MCF 10A (cell line): ENCODE measurements at regions of chr16 and their contacts with region 1.

Region 1: DNA sequence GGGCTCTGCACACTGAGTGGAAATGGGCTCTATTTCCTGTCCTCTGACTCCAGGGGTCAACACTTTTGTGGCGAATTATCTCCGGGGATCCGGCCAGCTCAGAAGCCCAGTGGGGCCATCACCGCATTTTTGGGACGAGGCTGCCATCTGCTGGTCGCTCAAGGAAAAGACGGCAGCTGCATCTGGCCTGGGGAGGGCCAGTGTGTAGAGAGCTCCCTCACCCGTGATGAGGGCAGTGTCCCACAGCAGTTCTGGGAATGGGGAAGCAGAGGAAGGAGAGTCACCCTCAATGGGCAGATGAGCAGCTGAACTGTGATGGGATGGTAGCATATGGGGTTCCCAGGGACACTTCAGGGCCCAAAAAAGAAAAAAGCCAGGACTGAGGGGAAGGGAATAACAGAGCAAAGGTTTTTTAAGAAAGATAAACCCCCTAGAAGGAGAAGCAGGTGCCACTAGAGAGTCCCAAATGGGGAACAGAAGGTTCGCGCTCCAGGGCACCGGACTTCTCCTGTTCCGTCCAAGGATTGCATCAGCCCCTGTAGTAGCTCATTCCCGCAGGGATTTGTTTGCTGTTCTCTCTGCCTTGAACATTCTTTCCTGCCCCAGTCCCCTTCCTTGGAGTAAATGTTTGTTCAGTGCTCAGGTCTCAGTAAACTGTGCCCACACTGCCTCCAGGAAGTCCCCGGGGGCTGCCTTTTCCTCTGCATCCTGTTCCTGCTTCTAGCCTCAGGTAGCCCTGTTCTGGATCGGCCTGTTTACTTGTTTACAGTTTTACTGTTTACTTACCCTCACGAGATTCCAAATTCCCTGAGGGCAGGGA is 9.3 kb upstream of the ABCC12 start:
- DNase-seq: peak; percentile 78
- H3K4me3 Mint-ChIP-seq: peak overlapping the region; percentile 2
- H3K27ac Mint-ChIP-seq: no peak overlapping the region
- H3K4me1 Mint-ChIP-seq: peaks cover 5% of the 10 kb centered on the region
- H3K27me3 Mint-ChIP-seq: no peaks in the 10 kb centered on the region
- CTCF ChIP-seq: peak; percentile 85

Region 2: DNA sequence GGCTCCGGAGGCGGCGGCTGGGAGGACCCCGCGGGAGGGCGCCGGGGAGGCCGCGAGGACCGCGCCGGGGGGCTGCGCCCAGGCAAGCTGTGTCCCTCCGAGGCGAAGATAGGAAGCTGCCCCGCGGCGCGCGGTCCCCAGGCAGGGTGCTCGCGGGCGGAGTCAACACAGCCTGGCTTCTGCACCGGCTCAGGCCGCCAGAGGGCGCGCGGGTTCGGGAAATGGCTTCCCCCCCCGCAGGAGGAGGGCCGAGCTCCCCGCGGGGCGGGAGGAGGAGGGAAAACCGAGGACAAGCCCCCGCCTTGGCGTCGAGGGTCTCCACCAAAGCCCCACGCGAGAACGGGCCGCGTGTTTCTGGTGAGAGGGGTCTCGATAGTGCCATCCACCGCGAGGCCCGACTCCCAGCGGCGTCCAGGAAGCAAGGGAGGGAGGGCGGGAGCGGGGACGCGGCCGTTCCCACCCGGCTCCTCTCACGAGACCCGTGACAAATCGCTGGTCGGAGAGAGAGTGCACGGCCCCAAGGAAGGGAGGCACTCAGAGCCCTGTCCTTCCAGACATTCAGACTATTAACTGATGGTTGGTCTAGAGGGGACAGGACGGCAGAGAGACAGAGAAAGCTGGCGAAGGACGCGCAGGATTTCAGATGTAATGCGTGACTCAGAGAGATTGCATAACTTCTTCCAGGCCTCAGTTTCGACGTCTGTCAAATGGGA is 1127.2 kb before region 1 on chr16:
- CTCF ChIA-PET with region 1: interaction called, 15 read pairs
- POLR2A ChIA-PET with region 1: interaction called, 3 read pairs
- intact Hi-C with region 1: loop called (anchors 2 kb)
- DNase-seq: peak; percentile 78
- H3K4me3 Mint-ChIP-seq: peak overlapping the region; percentile 73
- H3K27ac Mint-ChIP-seq: no peak overlapping the region
- H3K4me1 Mint-ChIP-seq: peaks cover 5% of the 10 kb centered on the region
- H3K27me3 Mint-ChIP-seq: no peaks in the 10 kb centered on the region
- CTCF ChIP-seq: peak; percentile 89

Region 3: GRCh38 chr16:48176635-48177408 is 11.7 kb after region 1 on chr16:
- CTCF ChIA-PET with region 1: interaction called, 35 read pairs
- POLR2A ChIA-PET with region 1: interaction called, 3 read pairs
- intact Hi-C with region 1: no loop called
- DNase-seq: no peak
- H3K4me3 Mint-ChIP-seq: no peak overlapping the region
- H3K27ac Mint-ChIP-seq: no peak overlapping the region
- H3K4me1 Mint-ChIP-seq: no peaks in the 10 kb centered on the region
- H3K27me3 Mint-ChIP-seq: no peaks in the 10 kb centered on the region
- CTCF ChIP-seq: no peak

Region 4: GRCh38 chr16:48330841-48331192 is 165.7 kb after region 1 on chr16:
- CTCF ChIA-PET with region 1: no interaction called
- POLR2A ChIA-PET with region 1: no interaction called
- intact Hi-C with region 1: no loop called
- DNase-seq: no peak
- H3K4me3 Mint-ChIP-seq: no peak overlapping the region
- H3K27ac Mint-ChIP-seq: no peak overlapping the region
- H3K4me1 Mint-ChIP-seq: no peaks in the 10 kb centered on the region
- H3K27me3 Mint-ChIP-seq: no peaks in the 10 kb centered on the region
- CTCF ChIP-seq: no peak

Region 5: GRCh38 chr16:48526058-48526957 is 361.2 kb after region 1 on chr16:
- CTCF ChIA-PET with region 1: interaction called, 9 read pairs
- POLR2A ChIA-PET with region 1: interaction called, 3 read pairs
- intact Hi-C with region 1: loop called (anchors 1 kb)
- DNase-seq: peak; percentile 84
- H3K4me3 Mint-ChIP-seq: no peak overlapping the region
- H3K27ac Mint-ChIP-seq: no peak overlapping the region
- H3K4me1 Mint-ChIP-seq: peaks cover 12% of the 10 kb centered on the region
- H3K27me3 Mint-ChIP-seq: no peaks in the 10 kb centered on the region
- CTCF ChIP-seq: peak; percentile 69

Region 6: GRCh38 chr16:48632137-48632774 is 467.1 kb after region 1 on chr16:
- CTCF ChIA-PET with region 1: no interaction called
- POLR2A ChIA-PET with region 1: no interaction called
- intact Hi-C with region 1: loop called (anchors 2 kb)
- DNase-seq: no peak
- H3K4me3 Mint-ChIP-seq: no peak overlapping the region
- H3K27ac Mint-ChIP-seq: no peak overlapping the region
- H3K4me1 Mint-ChIP-seq: peaks cover 7% of the 10 kb centered on the region
- H3K27me3 Mint-ChIP-seq: peaks cover 18% of the 10 kb centered on the region
- CTCF ChIP-seq: no peak